ENCODE measurements at regions of chr9 and their contacts with region 1.

Region 1: GRCh38 chr9:87324613-87325194 is 173.0 kb upstream of the DAPK1 start:
- DNase-seq: peak; percentile 44
- ATAC-seq: peak; percentile 83
- H3K4me3 ChIP-seq: no peak overlapping the region
- H3K27ac ChIP-seq: no peak overlapping the region
- H3K4me1 ChIP-seq: no peaks in the 10 kb centered on the region
- H3K27me3 ChIP-seq: peaks cover 5% of the 10 kb centered on the region; the same call in 1 of the 2 replicates
- CTCF ChIP-seq: peak; percentile 45 to 66 (median 59); a peak in 5 of 6 replicates
- POLR2A ChIP-seq: no peak
- RAD21 ChIP-seq: peak; percentile 87

Region 2: GRCh38 chr9:86282077-86282978 is 1042.4 kb before region 1 on chr9 and contains the start of gene ISCA1:
- CTCF ChIA-PET with region 1: no interaction called
- POLR2A ChIA-PET with region 1: no interaction called
- RAD21 ChIA-PET with region 1: no interaction called
- intact Hi-C with region 1: loop called (anchors 5 kb)
- DNase-seq: peak; percentile 64
- ATAC-seq: peak; percentile 93
- H3K4me3 ChIP-seq: peak within 1 kb of the TSS; percentile 95 to 97
- H3K27ac ChIP-seq: peak within 1 kb of the TSS; percentile 97
- H3K4me1 ChIP-seq: peaks cover 5 to 15% of the 10 kb centered on the region in 2 experiments; a peak in 3 of 4 replicates
- H3K27me3 ChIP-seq: no peaks in the 10 kb centered on the region
- CTCF ChIP-seq: no peak
- POLR2A ChIP-seq: peak; percentile 60
- RAD21 ChIP-seq: no peak
- total RNA-seq, gene ISCA1: 25.7 TPM

Region 3: DNA sequence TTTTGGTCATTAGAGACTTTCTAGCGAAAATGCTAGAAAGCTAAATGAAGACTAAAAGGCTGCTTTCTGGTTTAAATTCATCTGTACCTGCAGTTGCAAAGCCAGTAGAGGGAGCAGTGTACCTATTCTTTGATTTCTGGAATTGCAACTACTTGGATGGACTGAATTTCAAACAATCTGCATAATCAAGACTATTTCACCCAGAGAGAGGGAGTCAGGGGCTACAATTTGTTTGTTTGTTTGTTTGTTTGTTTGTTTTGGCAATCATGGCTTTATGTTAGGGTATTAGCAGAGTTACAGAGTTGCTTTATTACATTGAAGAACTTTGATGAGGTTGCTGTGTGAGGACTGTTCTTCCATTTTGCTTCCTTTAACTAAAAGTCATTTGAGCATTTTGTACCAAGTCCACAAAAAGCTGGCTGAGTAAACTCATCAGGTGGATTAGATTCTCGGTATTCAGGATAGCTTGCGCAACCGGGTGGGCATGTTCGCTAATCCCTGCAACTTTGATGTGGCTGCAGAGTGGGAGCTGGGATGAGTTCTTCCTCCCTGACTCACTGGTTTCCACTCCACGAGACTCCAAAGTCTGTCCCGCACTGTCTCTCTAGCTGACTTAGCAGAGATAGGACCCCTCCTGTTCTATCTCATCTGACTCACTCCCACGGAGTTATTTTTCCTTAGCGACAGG is 890.5 kb before region 1 on chr9:
- CTCF ChIA-PET with region 1: interaction called, 20 read pairs
- POLR2A ChIA-PET with region 1: no interaction called
- RAD21 ChIA-PET with region 1: no interaction called
- intact Hi-C with region 1: loop called (anchors 1 kb)
- DNase-seq: peak; percentile 34
- ATAC-seq: peak; percentile 76
- H3K4me3 ChIP-seq: no peak overlapping the region
- H3K27ac ChIP-seq: no peak overlapping the region
- H3K4me1 ChIP-seq: peaks cover 0 to 6% of the 10 kb centered on the region in 2 experiments; a peak in 3 of 4 replicates
- H3K27me3 ChIP-seq: no peaks in the 10 kb centered on the region
- CTCF ChIP-seq: peak; percentile 58 to 88 (median 80); a peak in 5 of 6 replicates
- POLR2A ChIP-seq: no peak
- RAD21 ChIP-seq: peak; percentile 76

Region 4: GRCh38 chr9:86614871-86615849 is 709.5 kb before region 1 on chr9:
- CTCF ChIA-PET with region 1: no interaction called
- POLR2A ChIA-PET with region 1: no interaction called
- RAD21 ChIA-PET with region 1: no interaction called
- intact Hi-C with region 1: loop called (anchors 2 kb)
- DNase-seq: no peak
- ATAC-seq: peak; percentile 76
- H3K4me3 ChIP-seq: no peak overlapping the region
- H3K27ac ChIP-seq: no peak overlapping the region
- H3K4me1 ChIP-seq: no peaks in the 10 kb centered on the region
- H3K27me3 ChIP-seq: peaks cover 10% of the 10 kb centered on the region
- CTCF ChIP-seq: peak; percentile 8 to 63 (median 54); a peak in 5 of 6 replicates
- POLR2A ChIP-seq: no peak
- RAD21 ChIP-seq: peak; percentile 39

Region 5: DNA sequence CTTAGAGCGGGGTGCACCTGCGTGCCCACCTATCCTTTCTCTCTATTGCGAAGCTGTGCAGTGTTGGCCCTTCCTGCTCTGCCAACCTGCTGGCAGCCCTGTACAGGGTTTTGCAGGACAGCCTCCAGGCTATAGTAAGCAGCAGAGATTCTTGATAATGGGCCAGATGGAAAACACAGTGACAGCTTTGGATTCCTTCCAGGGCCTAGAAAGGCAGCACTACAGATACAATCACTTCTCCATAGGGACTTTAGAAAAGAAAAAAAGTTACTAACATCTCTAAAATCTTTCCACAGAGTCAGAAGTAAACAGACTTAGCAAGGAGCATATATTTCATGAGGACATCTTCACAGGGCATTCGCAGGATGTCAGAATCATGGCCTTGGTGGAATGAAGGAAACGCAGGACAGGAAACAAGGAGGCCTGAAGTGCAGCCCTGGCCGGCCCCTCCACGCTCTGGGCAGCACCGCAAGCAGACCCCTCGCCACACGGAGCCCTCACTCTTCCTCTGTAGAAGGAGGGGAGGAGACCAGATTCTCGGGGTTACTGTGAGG is 205.3 kb before region 1 on chr9:
- CTCF ChIA-PET with region 1: no interaction called
- POLR2A ChIA-PET with region 1: no interaction called
- RAD21 ChIA-PET with region 1: no interaction called
- intact Hi-C with region 1: loop called (anchors 10 kb)
- DNase-seq: no peak
- ATAC-seq: no peak
- H3K4me3 ChIP-seq: no peak overlapping the region
- H3K27ac ChIP-seq: no peak overlapping the region
- H3K4me1 ChIP-seq: no peaks in the 10 kb centered on the region
- H3K27me3 ChIP-seq: peaks cover 37% of the 10 kb centered on the region
- CTCF ChIP-seq: no peak
- POLR2A ChIP-seq: no peak
- RAD21 ChIP-seq: no peak